Psoas muscle (tissue), 8 donors: ENCODE measurements at regions of chr20 and their contacts with region 1.

Region 1: DNA sequence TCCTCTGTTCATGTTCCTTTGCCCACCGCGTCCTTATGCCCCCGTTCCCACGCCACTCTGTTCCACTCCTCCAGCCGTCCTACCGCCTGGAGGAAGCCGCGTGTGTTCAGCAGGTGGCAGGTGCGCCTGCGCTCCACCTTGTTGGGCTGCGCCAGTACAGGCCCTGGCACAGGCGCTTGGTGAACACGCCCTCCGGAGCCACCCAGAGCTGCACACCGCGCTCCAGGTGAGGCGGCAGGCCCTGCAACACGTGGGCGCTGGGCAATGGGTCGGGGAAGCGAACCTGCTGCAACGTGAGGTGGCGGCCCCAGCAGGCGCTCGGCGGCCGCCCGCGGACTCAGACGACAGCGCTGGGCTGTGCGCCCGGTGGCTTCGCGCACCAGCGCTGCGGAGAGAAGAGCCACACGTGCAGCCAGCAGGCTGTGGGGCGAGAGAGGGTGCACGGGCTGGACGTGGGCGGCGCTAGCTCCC is 4.1 kb upstream of the FOXS1 start:
- DNase-seq: no peak
- ATAC-seq: no peak
- H3K4me3 ChIP-seq: no peak overlapping the region
- H3K27ac ChIP-seq: no peak overlapping the region
- H3K4me1 ChIP-seq: peaks cover 3% of the 10 kb centered on the region
- H3K27me3 ChIP-seq: peaks cover 0 to 27% (median 5%) of the 10 kb centered on the region in 3 donors
- CTCF ChIP-seq: no peak

Region 2: DNA sequence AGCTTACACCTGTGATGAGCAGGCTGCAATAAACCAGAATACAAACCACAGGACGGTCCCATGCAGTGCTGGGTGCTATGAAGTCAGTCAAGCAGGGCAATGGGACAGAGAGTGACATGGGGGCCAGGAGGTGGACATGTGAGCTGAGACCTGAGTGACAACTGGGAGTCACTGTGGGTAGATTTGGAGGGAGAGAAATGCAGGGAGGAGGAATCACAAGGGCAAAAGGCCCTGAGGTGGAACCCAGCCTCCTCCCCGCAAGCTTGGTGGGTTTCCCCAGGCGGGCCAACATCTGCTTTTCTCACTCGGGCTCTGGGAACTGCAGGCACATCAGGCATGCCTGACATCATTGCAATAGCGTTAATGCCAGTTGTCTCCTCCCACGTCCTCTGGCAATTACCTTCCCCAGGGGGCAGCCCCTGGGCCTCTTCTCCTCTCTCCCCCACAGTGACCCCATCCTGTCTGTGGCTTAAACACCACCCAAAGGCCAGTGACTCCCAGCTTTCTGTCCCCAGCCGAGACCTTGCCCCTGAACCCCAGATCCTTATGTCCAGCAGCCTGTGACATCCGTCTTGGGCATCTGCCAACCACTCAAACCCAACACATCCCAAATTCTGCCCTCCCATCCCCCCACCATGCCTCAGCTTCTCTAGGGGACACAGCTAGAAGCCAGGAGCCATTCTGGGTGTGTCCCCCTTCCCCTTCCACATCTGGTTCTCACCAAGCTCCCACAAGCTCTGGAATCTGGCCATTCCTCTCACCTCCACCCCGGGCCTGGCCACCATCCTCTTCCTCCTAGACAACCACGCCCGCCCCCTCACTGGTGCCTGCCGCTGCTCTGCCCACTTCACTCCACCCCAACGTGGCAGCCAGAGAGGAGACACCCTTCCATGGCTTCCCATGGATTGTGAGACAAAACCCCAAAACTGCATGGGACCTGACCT is 74.2 kb after region 1 on chr20:
- intact Hi-C with region 1: no loop called
- DNase-seq: no peak
- ATAC-seq: no peak
- H3K4me3 ChIP-seq: no peak overlapping the region
- H3K27ac ChIP-seq: no peak overlapping the region
- H3K4me1 ChIP-seq: no peaks in the 10 kb centered on the region
- H3K27me3 ChIP-seq: peaks cover 0 to 4% (median 0%) of the 10 kb centered on the region in 3 donors
- CTCF ChIP-seq: no peak

Region 3: DNA sequence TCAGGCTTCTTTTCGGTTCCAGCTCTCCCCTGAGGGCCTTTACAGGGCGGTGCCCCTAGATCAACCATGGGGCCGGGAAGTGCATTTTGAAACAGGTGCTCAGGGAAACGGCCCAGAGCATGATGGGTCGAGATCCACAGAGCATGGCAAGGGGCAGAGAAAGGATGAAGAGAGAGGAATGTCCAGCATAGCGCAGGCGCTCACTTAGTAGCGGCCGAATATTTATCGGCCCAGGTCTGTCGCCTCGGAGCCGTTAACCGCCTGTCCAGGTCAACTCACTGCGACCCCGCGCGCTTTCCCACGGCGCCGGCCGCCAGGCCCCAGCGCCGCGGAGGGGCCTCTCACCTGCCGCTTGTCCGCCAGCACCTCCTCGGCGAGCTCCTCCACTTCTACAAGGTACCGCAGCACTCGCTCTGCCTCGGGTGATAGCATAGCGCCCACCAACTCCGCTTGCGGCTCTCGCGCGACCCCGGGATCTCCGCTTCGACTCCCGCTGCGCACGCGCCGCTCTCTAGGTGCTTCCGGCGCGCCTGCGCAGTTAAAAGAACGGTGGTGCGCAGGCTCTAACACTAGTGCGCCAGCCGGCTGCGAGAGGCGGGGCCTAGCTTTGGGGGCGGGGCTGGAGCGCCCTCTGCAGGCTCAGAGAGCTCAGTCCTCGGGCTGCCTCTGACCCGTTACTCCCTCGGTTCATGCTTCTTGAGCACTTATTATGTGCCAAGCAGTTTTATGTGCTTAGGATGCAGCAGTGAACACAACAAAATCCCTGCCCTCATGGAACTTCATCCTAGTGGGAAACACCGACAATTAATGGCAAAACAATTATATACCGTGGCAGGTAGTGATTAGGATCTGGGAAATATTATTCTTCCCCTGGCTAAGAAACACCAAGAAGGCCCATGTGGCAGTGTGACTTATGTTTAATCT is 102.3 kb after region 1 on chr20 and contains the start of gene PDRG1:
- intact Hi-C with region 1: loop called (anchors 2 to 5 kb)
- DNase-seq: peak; percentile 96 to 98
- ATAC-seq: peak; percentile 98 to 100 (median 99)
- H3K4me3 ChIP-seq: peak within 1 kb of the TSS; percentile 95
- H3K27ac ChIP-seq: peak within 1 kb of the TSS; percentile 85
- H3K4me1 ChIP-seq: peaks cover 11% of the 10 kb centered on the region
- H3K27me3 ChIP-seq: peaks cover 0 to 11% (median 0%) of the 10 kb centered on the region in 3 donors
- CTCF ChIP-seq: peak; percentile 92
- total RNA-seq, gene PDRG1: 7.8 to 15.8 (median 11.1) TPM

Region 4: GRCh38 chr20:32031007-32031958 is 181.8 kb after region 1 on chr20:
- intact Hi-C with region 1: loop called in 1 of 2 experiments (anchors 1 kb)
- DNase-seq: peak; percentile 77 to 87
- ATAC-seq: peak; percentile 84 to 94 (median 87)
- H3K4me3 ChIP-seq: peak overlapping the region; percentile 50
- H3K27ac ChIP-seq: no peak overlapping the region
- H3K4me1 ChIP-seq: no peaks in the 10 kb centered on the region
- H3K27me3 ChIP-seq: peaks cover 0 to 32% (median under 1%) of the 10 kb centered on the region in 3 donors
- CTCF ChIP-seq: peak; percentile 93

Region 5: DNA sequence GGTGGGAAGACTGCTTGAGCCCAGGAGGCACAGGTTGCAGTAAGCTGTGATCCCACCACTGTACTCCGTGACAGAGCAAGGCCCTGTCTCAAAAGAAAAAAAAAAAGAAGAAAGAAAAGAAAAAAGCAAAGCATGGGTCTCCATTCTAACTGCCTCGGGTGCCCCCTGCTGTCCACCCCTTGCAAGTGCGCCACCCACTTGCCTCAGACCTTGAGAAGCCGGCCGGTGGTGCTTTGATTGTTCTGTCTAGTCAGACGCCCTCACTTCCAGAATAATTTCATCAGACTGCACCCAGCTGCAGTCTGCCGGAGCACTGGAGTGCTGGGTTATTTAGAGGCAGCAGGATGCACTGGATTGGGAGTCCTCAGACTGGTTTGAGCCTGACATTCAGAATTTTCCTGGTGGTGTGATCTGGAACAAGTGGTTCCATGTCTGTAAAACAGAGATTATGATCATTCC is 242.4 kb after region 1 on chr20:
- intact Hi-C with region 1: loop called in 1 of 2 experiments (anchors 5 kb)
- DNase-seq: peak; percentile 78 to 84
- ATAC-seq: peak; percentile 71 to 85 (median 82)
- H3K4me3 ChIP-seq: no peak overlapping the region
- H3K27ac ChIP-seq: no peak overlapping the region
- H3K4me1 ChIP-seq: no peaks in the 10 kb centered on the region
- H3K27me3 ChIP-seq: no peaks in the 10 kb centered on the region
- CTCF ChIP-seq: peak; percentile 92

Region 6: GRCh38 chr20:32652739-32653526 is 803.4 kb after region 1 on chr20:
- intact Hi-C with region 1: loop called in 1 of 2 experiments (anchors 5 kb)
- DNase-seq: peak; percentile 80 to 89
- ATAC-seq: peak; percentile 90 to 97 (median 96)
- H3K4me3 ChIP-seq: no peak overlapping the region
- H3K27ac ChIP-seq: no peak overlapping the region
- H3K4me1 ChIP-seq: no peaks in the 10 kb centered on the region
- H3K27me3 ChIP-seq: no peaks in the 10 kb centered on the region
- CTCF ChIP-seq: peak; percentile 94